CD8-positive, alpha-beta memory T cell (primary cell): ENCODE measurements at regions of chr12 and their contacts with region 1.

Region 1: GRCh38 chr12:54749191-54749818 is 101.1 kb upstream of the DCD start:
- DNase-seq: peak in 4 of 5 donors; percentile 20 to 57 (median 42)
- H3K4me3 ChIP-seq: no peak overlapping the region
- H3K4me3 Mint-ChIP-seq: peak overlapping the region in 6 of 7 donors; percentile 10 to 73 (median 60)
- H3K27ac ChIP-seq: no peak overlapping the region
- H3K27ac Mint-ChIP-seq: peak overlapping the region in 3 of 8 donors; percentile 6 to 64 (median 22)
- H3K4me1 ChIP-seq: peaks cover 16% of the 10 kb centered on the region
- H3K4me1 Mint-ChIP-seq: peaks cover 15 to 24% (median 23%) of the 10 kb centered on the region in 3 donors
- H3K27me3 ChIP-seq: no peaks in the 10 kb centered on the region
- H3K27me3 Mint-ChIP-seq: peaks cover 0 to 6% of the 10 kb centered on the region in 2 donors

Region 2: GRCh38 chr12:54701940-54702592 is 47.2 kb before region 1 on chr12:
- CTCF ChIA-PET with region 1: interaction called, 11 read pairs
- POLR2A ChIA-PET with region 1: no interaction called
- DNase-seq: peak in 2 of 5 donors; percentile 37 to 47
- H3K4me3 ChIP-seq: no peak overlapping the region
- H3K4me3 Mint-ChIP-seq: no peak overlapping the region
- H3K27ac ChIP-seq: no peak overlapping the region
- H3K27ac Mint-ChIP-seq: no peak overlapping the region
- H3K4me1 ChIP-seq: no peaks in the 10 kb centered on the region
- H3K4me1 Mint-ChIP-seq: no peaks in the 10 kb centered on the region
- H3K27me3 ChIP-seq: no peaks in the 10 kb centered on the region
- H3K27me3 Mint-ChIP-seq: peaks cover 6 to 7% of the 10 kb centered on the region in 2 donors

Region 3: DNA sequence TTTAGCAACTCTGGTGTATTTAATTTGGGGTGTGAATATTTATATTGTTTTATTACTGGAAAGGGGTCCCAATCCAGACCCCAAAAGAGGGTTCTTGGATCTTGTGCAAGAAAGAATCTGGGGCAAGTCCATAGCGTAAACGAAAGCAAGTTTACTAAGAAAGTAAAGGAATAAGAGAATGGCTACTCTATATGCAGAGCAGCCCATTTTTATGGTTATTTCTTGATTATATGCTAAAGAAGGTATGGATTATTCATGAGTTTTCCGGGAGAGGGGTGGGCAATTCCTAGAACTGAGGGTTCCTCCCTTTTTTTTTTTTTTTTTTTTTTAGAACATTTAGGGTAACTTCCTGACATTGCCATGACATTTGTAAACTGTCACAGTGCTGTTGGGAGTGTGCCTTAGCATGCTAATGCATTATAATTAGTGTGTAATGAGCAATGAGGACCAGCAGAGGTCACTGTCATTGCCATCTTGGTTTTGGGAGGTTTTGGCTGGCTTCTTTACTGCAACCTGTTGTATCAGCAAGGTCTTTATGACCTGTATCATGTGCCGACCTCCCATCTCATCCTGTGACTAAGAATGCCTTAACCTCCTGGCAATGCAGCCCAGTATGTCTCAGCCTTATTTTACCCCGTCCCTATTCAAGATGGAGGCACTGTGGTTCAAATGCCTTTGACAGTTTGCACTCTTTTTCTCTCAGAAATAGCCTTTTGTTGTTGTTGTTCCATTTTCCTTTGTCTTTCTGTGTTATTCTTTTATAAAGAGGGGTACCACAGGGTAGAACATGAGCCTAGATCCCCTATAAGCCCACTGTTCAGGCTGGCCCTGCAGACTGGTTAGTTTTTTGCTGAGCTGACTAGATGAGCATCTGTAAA is 25.7 kb before region 1 on chr12:
- CTCF ChIA-PET with region 1: interaction called, 10 read pairs
- POLR2A ChIA-PET with region 1: no interaction called
- DNase-seq: peak in 4 of 5 donors; percentile 7 to 49 (median 28)
- H3K4me3 ChIP-seq: no peak overlapping the region
- H3K4me3 Mint-ChIP-seq: no peak overlapping the region
- H3K27ac ChIP-seq: no peak overlapping the region
- H3K27ac Mint-ChIP-seq: peak overlapping the region in 1 of 8 donors; percentile 30
- H3K4me1 ChIP-seq: peaks cover 3% of the 10 kb centered on the region
- H3K4me1 Mint-ChIP-seq: peaks cover 11 to 31% (median 25%) of the 10 kb centered on the region in 3 donors
- H3K27me3 ChIP-seq: no peaks in the 10 kb centered on the region
- H3K27me3 Mint-ChIP-seq: peaks cover 8 to 17% of the 10 kb centered on the region in 2 donors

Region 4: GRCh38 chr12:54775376-54775775 is 26.1 kb after region 1 on chr12:
- CTCF ChIA-PET with region 1: no interaction called
- POLR2A ChIA-PET with region 1: no interaction called
- DNase-seq: no peak
- H3K4me3 ChIP-seq: no peak overlapping the region
- H3K4me3 Mint-ChIP-seq: no peak overlapping the region
- H3K27ac ChIP-seq: no peak overlapping the region
- H3K27ac Mint-ChIP-seq: peak overlapping the region in 1 of 8 donors; percentile 73
- H3K4me1 ChIP-seq: peaks cover 4% of the 10 kb centered on the region
- H3K4me1 Mint-ChIP-seq: peaks cover 0 to 19% (median 6%) of the 10 kb centered on the region in 3 donors
- H3K27me3 ChIP-seq: no peaks in the 10 kb centered on the region
- H3K27me3 Mint-ChIP-seq: peaks cover 25 to 52% of the 10 kb centered on the region in 2 donors

Region 5: DNA sequence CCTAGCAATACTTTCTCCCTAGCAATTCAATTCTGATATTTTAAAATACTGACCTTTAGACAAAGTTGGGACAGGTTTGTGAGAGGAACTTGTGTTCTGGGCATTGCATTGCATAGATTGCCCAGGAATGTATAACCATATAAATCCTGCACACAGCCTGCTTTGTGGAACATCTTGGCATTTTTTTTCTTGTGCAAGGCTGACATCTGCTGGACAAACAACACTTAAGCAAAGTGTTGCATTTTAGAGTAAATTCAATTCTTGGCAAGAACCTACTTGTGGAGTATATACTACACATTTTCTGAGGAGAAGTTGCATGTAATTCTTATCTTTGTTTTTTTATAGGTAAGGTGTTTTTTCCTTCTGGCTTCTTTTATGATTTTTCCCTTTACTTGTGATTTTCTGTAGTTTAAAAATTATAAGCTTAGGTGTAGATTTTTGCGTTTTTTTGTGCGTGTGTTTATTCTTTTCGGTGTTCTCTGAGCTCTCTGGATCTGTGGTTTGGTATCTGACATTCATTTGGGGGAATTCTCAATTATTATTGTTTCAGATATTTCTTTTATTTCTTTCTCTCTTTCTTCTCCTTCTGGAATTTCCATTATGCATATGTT is 208.8 kb after region 1 on chr12:
- CTCF ChIA-PET with region 1: interaction called, 17 read pairs
- POLR2A ChIA-PET with region 1: no interaction called
- DNase-seq: peak in 4 of 5 donors; percentile 35 to 65 (median 50)
- H3K4me3 ChIP-seq: no peak overlapping the region
- H3K4me3 Mint-ChIP-seq: peak overlapping the region in 3 of 7 donors; percentile 11 to 36 (median 35)
- H3K27ac ChIP-seq: no peak overlapping the region
- H3K27ac Mint-ChIP-seq: peak overlapping the region in 4 of 8 donors; percentile 12 to 76 (median 57)
- H3K4me1 ChIP-seq: peaks cover 78% of the 10 kb centered on the region
- H3K4me1 Mint-ChIP-seq: peaks cover 61 to 93% (median 79%) of the 10 kb centered on the region in 3 donors
- H3K27me3 ChIP-seq: no peaks in the 10 kb centered on the region
- H3K27me3 Mint-ChIP-seq: no peaks in the 10 kb centered on the region